Astrocyte of the cerebellum (primary cell): ENCODE measurements at regions of chr5 and their contacts with region 1.

Region 1: DNA sequence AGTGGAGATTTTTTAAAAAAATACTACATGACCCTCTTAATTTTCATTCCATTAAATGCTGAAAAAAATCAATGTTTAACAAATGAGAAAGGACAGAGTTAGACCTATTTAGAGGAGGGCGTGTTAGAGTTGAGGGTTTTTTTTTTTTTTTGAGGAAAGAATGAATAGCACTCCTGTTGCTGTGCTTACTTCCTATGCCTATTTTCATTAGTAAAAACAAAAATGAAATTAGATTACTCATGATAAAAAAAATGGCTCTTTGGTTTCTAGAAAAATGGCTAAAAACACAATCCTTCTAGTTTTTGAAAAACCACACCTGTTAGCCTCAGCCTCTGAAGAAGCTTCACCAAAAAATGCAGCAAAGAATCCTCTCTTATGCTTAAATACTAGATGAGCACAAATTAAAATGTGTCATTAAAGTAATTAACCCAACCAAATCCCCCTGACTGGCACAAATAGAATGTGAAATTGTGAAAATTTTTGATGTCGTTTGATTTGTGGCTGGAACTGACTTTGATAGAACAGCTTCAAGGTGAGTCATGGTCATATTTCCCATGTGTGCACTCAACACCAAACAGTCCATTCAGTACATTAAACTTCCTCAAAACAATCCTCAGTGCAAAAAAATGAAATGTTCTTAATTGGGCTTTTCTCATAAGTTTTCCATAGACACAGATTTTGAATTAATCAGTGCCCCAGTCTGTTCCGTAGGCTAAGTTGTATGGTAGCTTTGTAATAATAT is 98.0 kb downstream of the MACIR start:
- DNase-seq: no peak
- H3K4me3 ChIP-seq: no peak overlapping the region
- CTCF ChIP-seq: no peak

Region 2: DNA sequence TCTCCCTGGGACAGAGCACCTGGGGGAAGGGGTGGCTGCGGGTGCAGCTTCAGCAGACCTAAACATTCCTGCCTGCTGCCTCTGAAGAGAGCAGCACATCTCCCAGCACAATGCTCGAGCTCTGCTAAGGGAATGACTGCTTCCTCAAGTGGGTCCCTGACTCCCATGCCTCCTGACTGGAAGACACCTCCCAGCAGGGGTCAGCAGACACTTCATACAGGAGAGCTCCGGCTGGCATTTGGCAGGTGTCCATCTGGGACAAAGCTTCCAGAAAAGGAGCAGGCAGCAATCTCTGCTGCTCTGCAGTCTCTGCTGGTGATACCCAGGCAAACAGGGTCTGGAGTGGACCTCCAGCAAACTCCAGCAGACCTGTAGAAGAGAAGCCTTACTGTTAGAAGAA is 934.9 kb before region 1 on chr5:
- in situ Hi-C with region 1: no loop called
- DNase-seq: no peak
- H3K4me3 ChIP-seq: no peak overlapping the region
- CTCF ChIP-seq: no peak

Region 3: GRCh38 chr5:103327893-103328292 is 28.6 kb before region 1 on chr5:
- in situ Hi-C with region 1: loop called (anchors 5 kb)
- DNase-seq: no peak
- H3K4me3 ChIP-seq: no peak overlapping the region
- CTCF ChIP-seq: no peak